ENCODE measurements at regions of chr9 and their contacts with region 1.

Region 1: DNA sequence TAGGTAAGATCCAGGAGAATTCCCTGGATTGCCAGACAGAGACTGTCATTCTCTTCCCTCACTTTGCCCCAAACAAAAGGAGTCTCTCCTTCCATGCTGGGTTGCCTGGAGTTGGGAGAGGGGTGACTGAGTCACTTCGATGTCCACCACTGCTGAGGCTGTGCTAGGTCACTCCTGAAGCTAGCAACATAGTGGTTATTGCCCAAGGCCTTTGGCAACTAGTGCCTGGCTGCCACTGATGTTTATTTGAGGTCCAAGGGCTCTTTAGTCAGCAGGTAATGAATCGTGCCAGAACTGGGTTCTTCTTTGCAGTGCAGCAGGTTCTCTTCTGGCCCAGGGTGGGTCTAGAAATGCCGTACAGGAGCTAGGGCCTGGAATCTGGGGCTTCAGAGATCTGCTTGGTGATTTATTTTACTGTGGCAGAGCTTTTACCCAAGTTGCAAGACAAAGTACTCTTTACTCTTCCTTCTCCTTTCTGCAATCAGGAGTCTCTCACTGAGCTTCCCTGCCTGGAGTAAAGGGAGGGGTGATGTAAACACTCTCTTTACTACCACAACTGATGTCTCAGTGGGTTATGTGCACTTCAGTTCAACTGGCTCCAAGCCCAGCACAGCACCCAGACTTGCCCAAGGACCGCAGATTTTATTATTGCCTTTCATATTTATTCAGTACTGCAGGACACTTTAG is 155.7 kb upstream of the SH3GL2 start:
- DNase-seq: no peak
- H3K4me3 ChIP-seq: no peak overlapping the region
- H3K27ac ChIP-seq: no peak overlapping the region
- H3K4me1 ChIP-seq: no peaks in the 10 kb centered on the region
- CTCF ChIP-seq: no peak

Region 2: DNA sequence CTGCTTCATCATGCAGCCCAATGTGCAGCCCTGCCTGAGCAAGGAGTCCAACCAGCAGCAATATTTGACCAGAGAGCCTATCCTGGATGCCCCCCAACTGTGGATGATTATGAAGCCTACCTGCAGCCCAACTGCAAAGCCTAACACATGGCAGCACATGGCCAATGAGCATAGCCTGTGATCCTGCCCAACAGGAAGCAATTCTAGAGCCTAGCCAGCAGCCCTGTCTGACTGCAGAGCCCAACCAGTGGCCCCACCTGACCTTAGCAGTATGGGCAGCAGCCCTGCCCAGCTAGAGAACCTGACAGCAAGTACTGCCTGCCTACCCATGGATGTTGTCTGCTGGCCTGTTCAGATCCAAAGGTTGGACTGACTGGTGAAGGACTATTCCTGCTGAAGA is 58.4 kb after region 1 on chr9:
- CTCF ChIA-PET with region 1: no interaction called
- POLR2A ChIA-PET with region 1: no interaction called
- intact Hi-C with region 1: loop called (anchors 10 kb)
- DNase-seq: no peak
- H3K4me3 ChIP-seq: no peak overlapping the region
- H3K27ac ChIP-seq: no peak overlapping the region
- H3K4me1 ChIP-seq: no peaks in the 10 kb centered on the region
- CTCF ChIP-seq: no peak

Measured in OCI-LY7 (cell line).